Left cardiac atrium (tissue), 4 donors: ENCODE measurements at regions of chr17 and their contacts with region 1.

Region 1: DNA sequence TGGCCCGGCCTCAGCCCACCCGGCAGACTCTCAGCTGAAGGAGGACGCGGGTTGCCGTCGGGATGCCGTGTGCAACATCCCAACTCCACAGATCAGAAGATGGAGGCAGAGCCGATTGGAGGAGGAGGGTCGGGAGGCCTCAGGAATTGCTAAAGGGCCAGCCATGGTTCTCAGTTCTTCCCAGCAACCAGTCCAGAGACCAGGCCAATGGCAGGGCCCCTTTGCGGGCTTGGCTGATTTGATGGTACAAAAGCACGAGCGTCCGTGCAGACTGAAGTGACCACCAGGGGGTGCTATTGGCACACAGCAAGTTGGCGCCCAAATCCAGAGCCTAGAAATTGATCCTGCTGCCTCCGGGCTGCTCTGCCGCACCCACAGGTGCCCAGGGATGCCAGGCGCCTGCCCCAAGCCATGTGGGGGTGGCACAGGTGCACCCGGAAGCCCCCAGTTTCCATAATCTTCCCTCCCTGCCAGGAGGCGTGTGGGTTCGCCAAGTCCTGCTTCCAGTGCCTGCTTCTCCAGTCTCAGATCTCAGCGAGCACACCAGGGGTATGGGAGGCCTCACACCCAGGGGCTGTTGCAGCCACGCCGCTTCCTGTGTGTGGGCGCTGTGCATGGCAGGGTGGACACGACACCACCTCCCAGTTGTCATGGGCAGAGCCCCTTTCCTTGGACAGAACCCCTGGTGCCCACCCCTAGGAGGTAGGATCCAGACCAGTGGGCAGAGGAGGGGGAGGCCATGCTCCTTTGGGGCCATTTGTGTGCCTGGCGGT is 7.1 kb upstream of the TEX19 start:
- DNase-seq: peak; percentile 85
- ATAC-seq: peak; percentile 80 to 81

Region 2: GRCh38 chr17:81814748-81815645 is 536.9 kb before region 1 on chr17:
- intact Hi-C with region 1: no loop called
- DNase-seq: no peak
- ATAC-seq: no peak

Region 3: DNA sequence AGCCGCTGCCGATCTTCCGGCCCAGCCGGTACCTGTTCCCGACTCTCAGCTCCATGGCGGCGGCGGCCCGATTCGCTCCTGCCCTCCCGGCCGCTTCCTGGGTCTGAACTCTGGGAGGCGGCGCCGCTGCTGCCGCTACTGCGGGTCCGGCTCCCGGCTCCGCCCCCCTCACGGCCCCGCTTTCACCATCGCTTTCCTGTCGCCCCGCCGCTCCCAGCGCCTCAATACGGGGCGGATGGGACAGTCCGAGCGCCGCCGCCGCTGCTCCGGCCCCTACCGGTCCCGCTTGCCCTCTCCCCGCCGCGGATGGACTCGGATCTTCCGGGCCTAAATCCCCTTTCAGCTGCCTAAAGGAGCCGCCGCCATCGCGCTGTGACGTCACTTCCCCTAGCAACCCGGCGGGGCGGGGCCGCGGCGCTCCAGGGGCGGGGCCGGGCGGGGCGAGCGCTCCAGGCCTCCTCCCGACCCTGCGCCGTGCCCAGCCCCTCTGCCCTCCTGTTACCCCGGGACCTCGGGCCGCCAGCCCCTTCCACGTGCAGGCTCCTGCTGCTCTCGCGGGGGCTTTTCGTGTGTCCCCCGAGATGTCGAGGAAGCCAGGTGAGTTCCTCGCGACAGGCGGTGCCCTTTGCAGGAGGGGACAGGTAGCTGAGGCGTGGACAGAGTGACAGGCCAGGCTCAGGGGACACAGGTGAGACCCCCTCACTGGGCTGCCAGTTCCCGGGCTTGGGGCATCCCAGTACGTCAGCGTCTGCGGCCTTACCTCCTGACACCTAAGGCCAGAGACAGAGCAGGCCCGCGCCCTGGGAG is 78.4 kb before region 1 on chr17 and contains the start of gene CSNK1D:
- intact Hi-C with region 1: no loop called
- DNase-seq: peak; percentile 94
- ATAC-seq: peak; percentile 93 to 97
- total RNA-seq, gene CSNK1D: 63.6 to 88.2 TPM

Region 4: GRCh38 chr17:82300707-82301270 is 51.1 kb before region 1 on chr17:
- intact Hi-C with region 1: no loop called
- DNase-seq: peak; percentile 75
- ATAC-seq: no peak

Region 5: DNA sequence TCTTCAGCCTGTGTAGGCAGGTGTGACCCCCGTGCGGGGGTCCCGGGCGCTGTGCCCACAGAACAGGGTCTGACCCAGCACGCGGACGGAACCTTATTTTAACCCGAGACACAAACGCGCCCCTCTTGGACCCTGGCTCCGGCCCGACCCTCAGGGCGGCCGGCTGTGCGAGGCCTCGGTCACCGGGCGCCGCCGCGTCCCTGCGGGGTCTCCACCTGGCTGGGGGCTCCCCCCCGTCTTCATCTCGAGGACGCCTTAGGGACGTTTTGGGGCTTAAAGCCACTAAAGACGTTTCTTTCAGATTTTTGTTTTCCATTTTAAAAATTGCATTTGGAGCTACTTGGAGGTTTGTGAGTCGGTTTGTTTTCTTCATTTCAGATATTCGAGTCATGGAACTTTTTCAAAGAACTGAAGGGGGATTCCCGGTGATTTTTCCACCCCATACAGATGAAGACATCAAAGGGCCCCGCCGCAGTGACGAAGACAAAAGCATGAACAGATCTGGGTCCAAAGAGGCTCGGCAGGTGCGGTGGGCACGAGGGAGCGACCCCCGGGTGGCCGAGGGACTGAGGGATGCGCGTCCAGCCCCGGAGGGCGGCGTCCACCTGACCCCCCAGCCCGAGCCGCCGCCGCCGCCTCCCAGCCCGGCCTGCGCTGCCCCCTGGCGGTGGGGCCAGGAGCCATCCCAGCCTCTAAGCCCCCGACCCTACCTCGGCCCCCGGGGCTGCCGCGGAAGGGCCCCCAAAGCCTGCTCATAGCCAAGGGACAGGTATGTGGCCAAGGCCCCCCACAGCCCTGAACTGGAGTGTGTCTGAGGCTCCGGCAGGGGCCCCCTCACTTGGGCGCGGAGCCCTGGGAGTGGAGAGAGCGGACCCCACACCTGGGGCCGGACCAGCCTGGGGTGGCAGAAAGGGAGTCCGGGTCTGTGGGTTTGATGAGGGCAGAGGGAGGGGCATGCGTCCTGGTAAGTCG is 30.7 kb before region 1 on chr17:
- intact Hi-C with region 1: no loop called
- DNase-seq: no peak
- ATAC-seq: peak in 1 of 2 donors; percentile 54

Region 6: GRCh38 chr17:82414548-82415281 is 62.8 kb after region 1 on chr17:
- intact Hi-C with region 1: loop called (anchors 2 kb)
- DNase-seq: peak; percentile 81
- ATAC-seq: peak; percentile 67 to 73

Region 7: GRCh38 chr17:82551779-82552457 is 200.0 kb after region 1 on chr17:
- intact Hi-C with region 1: loop called in 1 of 2 experiments (anchors 10 kb)
- DNase-seq: peak; percentile 77
- ATAC-seq: peak; percentile 84 to 85

Region 8: DNA sequence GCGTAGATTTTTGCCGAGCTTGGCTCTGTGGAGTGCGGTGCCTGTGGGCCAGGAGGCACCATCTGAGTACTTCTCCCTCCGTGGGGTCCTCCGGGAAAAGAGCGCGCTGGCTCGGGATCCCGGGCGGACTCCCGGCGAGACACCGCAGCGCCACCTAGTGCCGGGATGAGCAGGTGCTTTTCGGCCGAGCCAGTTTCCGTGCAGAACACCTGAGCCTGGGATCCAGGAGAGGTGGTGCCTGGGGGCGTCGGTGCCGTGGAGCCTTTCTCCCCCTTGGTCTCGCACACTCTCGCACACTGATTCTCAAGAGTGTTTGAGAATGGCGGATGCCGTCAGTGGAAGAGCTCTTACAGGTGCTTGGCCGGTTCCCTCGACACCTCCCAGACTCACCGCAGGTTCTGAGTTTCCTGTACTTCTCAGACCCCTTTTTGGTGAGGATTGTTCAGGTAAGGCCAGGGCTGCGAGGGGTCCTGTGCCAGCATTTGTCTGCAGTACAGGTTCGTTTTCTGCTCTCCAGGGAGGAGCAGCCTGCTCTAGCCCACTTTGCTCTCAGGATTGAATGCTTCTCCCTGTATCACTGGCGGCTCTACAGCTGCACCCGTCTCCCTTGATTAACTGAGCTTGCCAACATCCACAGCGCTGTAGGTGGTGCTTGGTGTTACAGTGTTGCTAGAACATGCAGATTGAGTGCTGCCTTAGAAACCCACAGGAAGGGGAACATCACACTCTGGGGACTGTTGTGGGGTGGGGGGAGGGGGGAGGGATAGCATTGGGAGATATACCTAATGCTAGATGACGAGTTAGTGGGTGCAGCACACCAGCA is 423.3 kb after region 1 on chr17:
- intact Hi-C with region 1: loop called (anchors 5 to 10 kb)
- DNase-seq: peak; percentile 75
- ATAC-seq: peak; percentile 50 to 66